CD4-positive, alpha-beta T cell (primary cell): ENCODE measurements at regions of chr2 and their contacts with region 1.

Region 1: DNA sequence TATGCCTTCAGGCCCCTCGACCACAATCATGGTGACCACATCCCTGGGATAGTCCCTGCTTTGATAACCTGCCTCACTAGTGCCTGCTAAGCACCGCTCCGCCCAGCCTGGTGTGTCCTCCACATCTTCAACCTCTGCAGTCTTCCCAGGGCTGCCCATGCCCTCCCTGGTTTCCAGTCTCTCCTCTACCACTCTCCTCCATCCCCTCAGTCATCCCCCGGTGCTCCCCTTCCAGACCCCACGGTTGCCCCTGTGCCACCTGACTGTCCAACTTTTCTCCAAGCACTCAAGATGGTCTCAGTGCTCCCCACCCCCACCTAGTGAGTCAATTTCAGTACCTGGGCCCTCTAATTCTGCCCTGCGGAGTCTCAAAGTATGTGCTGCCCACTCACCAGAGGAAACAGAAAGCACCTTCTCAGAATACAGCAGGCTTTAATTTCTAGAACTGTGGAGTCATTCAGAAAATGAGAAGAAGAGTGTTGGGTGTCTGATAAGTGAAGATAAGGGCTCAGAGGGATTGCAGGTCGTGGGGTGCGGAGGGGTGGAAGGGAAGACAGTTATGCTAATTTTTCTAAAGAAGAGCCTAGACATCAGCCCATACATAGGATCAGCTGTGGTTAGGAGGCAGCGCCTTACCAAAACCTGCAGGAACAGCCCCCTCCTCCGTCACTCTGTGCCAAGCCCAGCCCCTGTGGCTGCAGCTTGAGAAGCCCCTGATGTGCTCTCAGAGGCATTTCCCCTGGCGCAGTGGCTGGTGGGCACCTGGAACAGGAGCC is 53.6 kb upstream of the CAB39 start:
- DNase-seq: peak in 6 of 14 experiments; percentile 16 to 66 (median 37)
- ATAC-seq: peak; percentile 40
- H3K4me3 ChIP-seq: peak overlapping the region; percentile 1
- H3K4me3 Mint-ChIP-seq: peak overlapping the region; percentile 65
- H3K27ac ChIP-seq: peak overlapping the region in 1 of 2 donors; percentile 18
- H3K27ac Mint-ChIP-seq: peak overlapping the region; percentile 90
- H3K4me1 ChIP-seq: peaks cover 87% of the 10 kb centered on the region
- H3K4me1 Mint-ChIP-seq: peaks cover 92% of the 10 kb centered on the region
- H3K27me3 ChIP-seq: no peaks in the 10 kb centered on the region
- H3K27me3 Mint-ChIP-seq: no peaks in the 10 kb centered on the region
- CTCF ChIP-seq: no peak

Region 2: GRCh38 chr2:230408244-230408842 is 250.7 kb before region 1 on chr2:
- CTCF ChIA-PET with region 1: no interaction called
- POLR2A ChIA-PET with region 1: no interaction called
- intact Hi-C with region 1: no loop called
- DNase-seq: no peak
- ATAC-seq: no peak
- H3K4me3 ChIP-seq: no peak overlapping the region
- H3K4me3 Mint-ChIP-seq: peak overlapping the region; percentile 34
- H3K27ac ChIP-seq: no peak overlapping the region
- H3K27ac Mint-ChIP-seq: peak overlapping the region; percentile 93
- H3K4me1 ChIP-seq: peaks cover 42% of the 10 kb centered on the region
- H3K4me1 Mint-ChIP-seq: peaks cover 65% of the 10 kb centered on the region
- H3K27me3 ChIP-seq: no peaks in the 10 kb centered on the region
- H3K27me3 Mint-ChIP-seq: no peaks in the 10 kb centered on the region
- CTCF ChIP-seq: no peak

Region 3: DNA sequence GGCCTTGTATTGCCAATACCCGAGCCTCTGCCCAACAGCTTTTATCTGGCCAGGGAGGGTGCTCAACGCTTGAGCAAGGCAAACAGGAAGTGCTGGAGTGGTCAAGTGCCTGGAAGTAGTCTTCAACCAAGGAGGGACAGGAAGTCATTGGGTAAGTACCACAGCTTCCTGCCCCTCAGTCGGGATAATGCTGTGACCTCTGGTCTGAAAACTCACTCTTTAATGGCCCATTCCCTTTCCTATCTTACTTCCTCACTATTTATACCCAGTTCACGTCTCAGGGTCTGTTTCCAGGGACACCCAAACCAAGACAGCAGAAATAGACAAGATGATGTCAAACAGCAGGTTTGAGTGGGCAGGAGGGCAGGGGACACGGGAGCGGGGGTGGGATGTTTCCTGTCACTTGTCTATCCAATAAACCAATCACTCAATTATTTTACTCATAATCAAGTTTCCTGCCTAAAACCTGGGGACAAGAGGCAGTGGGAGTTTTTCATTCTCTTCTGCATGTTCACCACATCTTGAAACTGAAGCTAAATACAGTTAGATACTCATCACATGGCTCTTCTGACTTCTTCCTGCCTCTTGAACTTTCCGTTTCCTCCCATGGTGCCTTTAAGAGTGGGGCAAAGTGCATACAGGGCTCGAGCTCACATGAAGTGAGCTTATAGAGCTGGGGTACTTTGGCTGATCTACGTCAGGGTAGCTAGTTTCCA is 15.3 kb before region 1 on chr2:
- CTCF ChIA-PET with region 1: interaction called, 3 read pairs
- POLR2A ChIA-PET with region 1: interaction called, 43 read pairs
- intact Hi-C with region 1: no loop called
- DNase-seq: peak in 5 of 14 experiments; percentile 41 to 78 (median 70)
- ATAC-seq: peak; percentile 97
- H3K4me3 ChIP-seq: peak overlapping the region; percentile 4
- H3K4me3 Mint-ChIP-seq: peak overlapping the region; percentile 52
- H3K27ac ChIP-seq: peak overlapping the region; percentile 73 to 85
- H3K27ac Mint-ChIP-seq: peak overlapping the region; percentile 91
- H3K4me1 ChIP-seq: peaks cover 31% of the 10 kb centered on the region
- H3K4me1 Mint-ChIP-seq: peaks cover 28% of the 10 kb centered on the region
- H3K27me3 ChIP-seq: no peaks in the 10 kb centered on the region
- H3K27me3 Mint-ChIP-seq: no peaks in the 10 kb centered on the region
- CTCF ChIP-seq: no peak

Region 4: GRCh38 chr2:230721712-230722111 is 62.6 kb after region 1 on chr2:
- CTCF ChIA-PET with region 1: no interaction called
- POLR2A ChIA-PET with region 1: interaction called, 10 read pairs
- intact Hi-C with region 1: no loop called
- DNase-seq: peak in 4 of 14 experiments; percentile 29 to 59 (median 45)
- ATAC-seq: no peak
- H3K4me3 ChIP-seq: peak overlapping the region; percentile 9
- H3K4me3 Mint-ChIP-seq: peak overlapping the region; percentile 76
- H3K27ac ChIP-seq: peak overlapping the region in 1 of 2 donors; percentile 32
- H3K27ac Mint-ChIP-seq: peak overlapping the region; percentile 88
- H3K4me1 ChIP-seq: peaks cover 74% of the 10 kb centered on the region
- H3K4me1 Mint-ChIP-seq: peaks cover 93% of the 10 kb centered on the region
- H3K27me3 ChIP-seq: no peaks in the 10 kb centered on the region
- H3K27me3 Mint-ChIP-seq: no peaks in the 10 kb centered on the region
- CTCF ChIP-seq: no peak

Region 5: DNA sequence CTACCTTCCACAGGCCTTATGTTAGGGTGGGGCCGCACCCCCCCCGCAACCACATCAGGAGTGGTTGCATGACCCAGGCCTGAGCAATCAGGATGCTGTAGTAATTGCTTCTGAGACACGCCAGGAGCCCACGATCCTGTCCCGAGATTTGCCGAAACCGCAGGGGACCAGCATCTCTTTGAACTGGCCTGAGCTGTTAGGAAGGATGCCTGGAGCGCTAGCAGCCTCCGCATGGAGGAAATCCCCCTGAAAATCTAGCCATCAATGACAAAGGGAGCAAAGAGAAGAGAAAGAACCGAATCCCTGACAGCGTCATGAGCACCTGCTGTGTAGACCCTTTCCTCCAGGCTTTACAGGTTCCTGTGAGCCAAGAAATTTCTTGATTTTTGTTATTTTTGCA is 924.9 kb after region 1 on chr2:
- CTCF ChIA-PET with region 1: no interaction called
- POLR2A ChIA-PET with region 1: no interaction called
- intact Hi-C with region 1: no loop called
- DNase-seq: no peak
- ATAC-seq: no peak
- H3K4me3 ChIP-seq: no peak overlapping the region
- H3K4me3 Mint-ChIP-seq: no peak overlapping the region
- H3K27ac ChIP-seq: no peak overlapping the region
- H3K27ac Mint-ChIP-seq: no peak overlapping the region
- H3K4me1 ChIP-seq: no peaks in the 10 kb centered on the region
- H3K4me1 Mint-ChIP-seq: no peaks in the 10 kb centered on the region
- H3K27me3 ChIP-seq: no peaks in the 10 kb centered on the region
- H3K27me3 Mint-ChIP-seq: no peaks in the 10 kb centered on the region
- CTCF ChIP-seq: no peak